AG04450 (cell line): ENCODE measurements at regions of chr1 and their contacts with region 1.

Region 1: GRCh38 chr1:210373885-210374599 is 45.3 kb downstream of the HHAT start:
- DNase-seq: peak; percentile 83
- H3K4me3 ChIP-seq: no peak overlapping the region
- H3K27ac ChIP-seq: peak overlapping the region; percentile 59
- H3K27me3 ChIP-seq: no peaks in the 10 kb centered on the region
- CTCF ChIP-seq: peak; percentile 96

Region 2: GRCh38 chr1:210123924-210124589 is 250.0 kb before region 1 on chr1:
- CTCF ChIA-PET with region 1: no interaction called
- POLR2A ChIA-PET with region 1: no interaction called
- DNase-seq: peak; percentile 34
- H3K4me3 ChIP-seq: no peak overlapping the region
- H3K27ac ChIP-seq: no peak overlapping the region
- H3K27me3 ChIP-seq: no peaks in the 10 kb centered on the region
- CTCF ChIP-seq: no peak

Region 3: GRCh38 chr1:210384630-210385029 is 10.6 kb after region 1 on chr1:
- CTCF ChIA-PET with region 1: interaction called, 39 read pairs
- POLR2A ChIA-PET with region 1: interaction called, 5 read pairs
- DNase-seq: no peak
- H3K4me3 ChIP-seq: no peak overlapping the region
- H3K27ac ChIP-seq: no peak overlapping the region
- H3K27me3 ChIP-seq: no peaks in the 10 kb centered on the region
- CTCF ChIP-seq: no peak

Region 4: DNA sequence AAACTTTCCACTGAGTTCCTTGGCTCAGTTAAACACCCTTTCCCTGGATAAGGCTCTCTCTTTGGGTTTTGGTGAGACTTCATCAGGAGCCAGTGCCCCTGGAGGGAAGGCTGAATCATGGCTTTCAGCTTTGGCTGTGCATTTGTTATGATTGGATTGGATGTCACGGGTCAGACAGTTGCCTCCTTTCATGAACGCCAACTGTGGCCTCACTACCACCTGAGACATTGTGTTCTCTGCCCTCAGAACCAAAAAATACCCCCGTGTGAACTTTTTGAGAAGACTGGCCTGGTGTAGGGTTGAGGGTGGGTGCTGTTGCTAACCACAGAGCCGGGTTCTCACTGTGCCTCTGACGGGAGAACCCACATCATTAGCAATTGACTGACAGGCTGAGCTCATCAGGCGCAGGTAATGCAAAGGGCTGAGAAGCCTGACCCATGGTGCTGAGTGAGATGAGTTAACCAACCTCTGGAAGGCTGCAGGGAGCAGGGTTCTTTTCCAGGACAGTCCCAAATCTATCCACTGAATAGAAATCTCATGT is 20.3 kb after region 1 on chr1:
- CTCF ChIA-PET with region 1: interaction called, 34 read pairs
- POLR2A ChIA-PET with region 1: interaction called, 6 read pairs
- DNase-seq: no peak
- H3K4me3 ChIP-seq: no peak overlapping the region
- H3K27ac ChIP-seq: no peak overlapping the region
- H3K27me3 ChIP-seq: no peaks in the 10 kb centered on the region
- CTCF ChIP-seq: no peak

Region 5: DNA sequence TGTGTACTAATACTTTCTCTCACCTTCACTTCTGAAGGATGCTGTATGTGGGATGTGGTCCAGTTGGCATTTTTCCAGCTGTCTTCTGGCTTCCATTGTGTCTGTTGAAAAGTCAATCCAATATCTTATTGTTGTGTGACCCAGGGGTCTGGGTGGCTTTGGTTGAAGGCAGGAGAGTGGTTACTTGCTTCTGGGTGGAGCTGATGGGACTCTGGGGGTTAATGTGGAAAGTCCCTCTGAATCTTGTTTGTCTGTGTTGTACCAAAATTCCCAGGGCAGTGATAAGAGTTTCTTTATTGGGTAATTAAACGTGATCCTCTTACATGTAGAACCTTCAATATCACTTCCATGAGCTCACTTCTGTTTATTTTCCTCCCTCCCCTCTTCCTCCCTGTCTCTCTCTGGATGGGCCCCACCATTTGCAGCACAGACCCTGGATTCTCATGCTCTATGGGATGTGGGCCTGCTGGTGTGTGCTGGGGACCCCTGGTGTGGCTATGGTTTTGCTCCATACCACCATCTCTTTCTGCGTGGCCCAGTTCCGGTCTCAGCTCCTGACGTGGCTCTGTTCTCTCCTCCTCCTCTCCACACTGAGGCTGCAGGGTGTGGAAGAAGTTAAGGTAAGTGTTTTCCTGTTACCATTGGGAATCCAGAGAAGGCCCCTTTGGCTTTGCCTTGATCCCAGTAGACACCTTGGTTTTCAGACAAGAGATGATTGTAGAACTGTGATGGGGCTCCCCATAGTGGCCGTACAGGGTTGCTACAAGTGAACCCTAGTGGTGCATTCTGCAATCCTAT is 26.2 kb after region 1 on chr1:
- CTCF ChIA-PET with region 1: interaction called, 34 read pairs
- POLR2A ChIA-PET with region 1: interaction called, 5 read pairs
- DNase-seq: peak; percentile 33
- H3K4me3 ChIP-seq: no peak overlapping the region
- H3K27ac ChIP-seq: no peak overlapping the region
- H3K27me3 ChIP-seq: no peaks in the 10 kb centered on the region
- CTCF ChIP-seq: peak; percentile 97

Region 6: DNA sequence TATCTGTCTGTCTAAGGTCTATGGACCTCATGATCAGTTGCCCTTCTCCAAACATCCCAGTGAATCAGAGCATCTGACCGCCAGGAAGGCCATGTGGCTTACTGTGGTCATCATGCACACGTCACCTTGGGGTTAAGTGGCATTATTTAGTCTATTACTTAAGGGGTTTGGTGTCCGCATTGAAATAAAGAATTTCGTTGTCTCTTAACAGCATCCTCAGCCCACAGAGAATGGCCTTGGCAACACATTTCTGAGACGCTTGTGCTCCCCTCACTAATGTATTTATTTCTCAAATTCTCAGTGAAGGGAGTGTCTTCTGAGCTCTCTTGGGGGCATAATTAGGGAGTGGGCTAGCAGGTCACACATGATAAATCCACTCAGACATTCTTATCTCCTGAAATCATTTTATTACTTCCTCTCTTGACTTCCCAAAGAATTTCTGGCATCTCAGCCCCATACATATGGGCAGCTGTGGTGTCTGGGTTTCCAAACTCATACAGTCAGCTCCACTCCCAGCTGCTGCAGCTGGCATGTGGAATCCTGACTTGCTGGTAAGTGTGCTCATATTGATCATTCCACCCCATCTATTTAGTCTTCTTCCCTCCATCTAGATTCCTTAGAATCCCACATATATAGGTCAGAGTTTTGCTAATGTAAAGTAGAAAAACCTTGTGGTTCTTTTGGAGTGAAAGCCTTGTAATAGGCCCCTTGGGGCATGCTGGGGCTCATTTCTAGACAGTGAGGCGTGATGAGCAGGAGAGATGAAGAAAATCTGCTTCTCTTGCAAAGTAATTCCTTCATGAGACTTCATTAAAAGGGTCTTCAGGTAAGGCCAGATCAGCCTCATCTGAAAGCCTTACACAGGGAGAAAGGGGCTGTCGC is 65.1 kb after region 1 on chr1:
- CTCF ChIA-PET with region 1: interaction called, 4 read pairs
- POLR2A ChIA-PET with region 1: interaction called, 10 read pairs
- DNase-seq: peak; percentile 94
- H3K4me3 ChIP-seq: no peak overlapping the region
- H3K27ac ChIP-seq: peak overlapping the region; percentile 92
- H3K27me3 ChIP-seq: no peaks in the 10 kb centered on the region
- CTCF ChIP-seq: no peak

Region 7: DNA sequence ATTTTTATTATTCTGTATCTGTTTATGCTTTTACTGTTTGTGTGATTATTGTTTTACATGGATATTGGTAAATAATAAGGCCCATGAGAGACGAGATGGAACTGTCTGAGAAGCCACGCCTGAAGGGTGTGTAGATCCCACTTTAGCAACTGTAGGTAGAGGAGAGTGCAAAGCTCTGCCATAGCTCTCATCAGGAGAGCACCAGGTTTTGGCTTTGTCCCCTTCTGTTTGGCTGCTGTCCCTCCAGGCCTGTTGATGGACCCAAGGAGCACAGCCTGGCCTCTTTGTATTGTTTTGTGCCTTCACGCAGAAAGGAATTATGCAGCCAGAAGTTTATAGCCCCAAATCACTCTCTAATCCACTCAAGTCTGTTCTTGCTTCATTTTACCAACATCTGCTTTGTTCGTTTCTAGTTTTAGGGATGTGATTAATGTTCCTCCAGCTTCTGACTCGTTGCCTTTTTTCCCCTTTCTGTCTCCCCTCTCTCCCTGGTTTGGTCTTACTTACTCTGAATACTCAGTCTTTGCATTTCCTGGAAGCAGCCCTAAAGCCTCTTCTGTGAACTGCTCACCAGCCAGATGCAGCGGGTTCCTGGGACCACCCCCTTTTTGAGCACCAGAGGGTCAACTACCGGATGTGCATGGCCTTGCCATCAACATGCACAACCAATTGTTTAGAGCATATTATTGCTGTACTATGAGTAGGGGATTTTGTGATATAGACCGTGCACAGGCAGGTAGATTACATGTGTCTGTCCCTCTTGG is 82.0 kb after region 1 on chr1:
- CTCF ChIA-PET with region 1: no interaction called
- POLR2A ChIA-PET with region 1: no interaction called
- DNase-seq: no peak
- H3K4me3 ChIP-seq: no peak overlapping the region
- H3K27ac ChIP-seq: no peak overlapping the region
- H3K27me3 ChIP-seq: no peaks in the 10 kb centered on the region
- CTCF ChIP-seq: no peak